Activated CD8-positive, alpha-beta memory T cell treated with anti-CD3 and anti-CD28 coated beads, Interleukin-2, amount 10 ng/mL, durations not matched to agents 7 days and 5 days (primary cell): ENCODE measurements at regions of chr6 and their contacts with region 1.

Region 1: GRCh38 chr6:134049176-134049575 is 3.2 kb downstream of the SLC2A12 start:
- DNase-seq: no peak
- ATAC-seq: no peak
- H3K4me3 Mint-ChIP-seq: no peak overlapping the region
- H3K27ac Mint-ChIP-seq: no peak overlapping the region
- H3K4me1 Mint-ChIP-seq: peaks cover 12% of the 10 kb centered on the region
- H3K27me3 Mint-ChIP-seq: peaks cover 17% of the 10 kb centered on the region

Region 2: DNA sequence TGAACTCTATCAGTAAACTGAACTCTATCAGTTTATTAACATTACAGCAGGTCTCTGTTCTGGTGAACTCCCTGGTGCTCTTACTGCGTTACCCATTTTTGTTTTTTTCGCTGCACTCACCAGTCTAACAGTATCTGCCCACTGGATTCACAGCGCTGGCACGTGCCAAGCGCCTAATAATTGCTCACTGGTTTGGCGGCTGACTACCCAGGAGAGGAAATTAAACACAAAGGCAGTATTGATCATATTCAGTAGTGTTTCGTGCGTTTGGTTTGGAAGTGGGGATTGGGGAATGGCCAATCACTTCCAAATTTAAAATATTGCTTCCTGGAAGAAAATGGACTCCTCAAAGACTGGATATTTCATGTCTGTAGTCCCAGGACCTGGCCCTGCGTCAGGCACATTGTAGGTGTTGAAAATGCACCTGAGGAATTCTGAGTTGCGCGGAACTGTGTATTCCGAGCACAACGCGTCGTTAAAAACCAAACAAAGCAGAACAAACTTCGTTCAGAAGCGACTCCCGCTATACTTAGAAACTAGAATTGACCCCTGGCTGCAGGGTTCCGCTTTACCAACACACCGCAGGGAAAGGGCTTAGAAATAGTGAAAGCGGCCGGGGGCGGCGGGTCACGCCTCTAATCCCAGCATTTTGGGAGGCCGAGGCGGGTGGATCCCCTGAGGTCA is 1235.9 kb before region 1 on chr6:
- CTCF ChIA-PET with region 1: no interaction called
- DNase-seq: peak; percentile 62
- ATAC-seq: peak; percentile 6
- H3K4me3 Mint-ChIP-seq: peak overlapping the region; percentile 97
- H3K27ac Mint-ChIP-seq: peak overlapping the region; percentile 100
- H3K4me1 Mint-ChIP-seq: peaks cover 37% of the 10 kb centered on the region
- H3K27me3 Mint-ChIP-seq: peaks cover 12% of the 10 kb centered on the region

Region 3: DNA sequence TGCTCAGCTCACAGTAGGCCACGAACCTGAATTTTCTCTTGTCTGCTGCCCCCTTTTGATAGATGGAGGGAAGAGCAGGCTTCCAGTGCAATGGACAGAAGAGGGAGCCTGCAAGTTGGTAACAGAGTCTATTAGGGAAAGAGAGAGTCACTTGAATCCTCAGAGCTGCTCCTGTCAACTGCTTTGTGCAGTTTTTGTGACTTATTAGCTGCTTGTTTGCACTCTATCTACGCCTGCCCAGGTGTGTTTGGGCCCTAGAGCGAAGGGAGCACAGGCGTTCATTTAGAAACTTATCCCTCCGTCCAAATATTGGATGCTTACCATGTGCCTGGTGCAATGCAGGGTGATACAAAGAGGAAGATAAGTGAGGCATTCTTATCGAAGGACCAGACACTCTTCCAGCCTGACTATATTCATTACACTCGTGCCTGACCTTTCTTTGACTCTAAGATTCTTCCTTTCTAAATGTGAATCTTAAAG is 14.8 kb after region 1 on chr6:
- CTCF ChIA-PET with region 1: interaction called, 25 read pairs
- DNase-seq: peak; percentile 66
- ATAC-seq: peak; percentile 91
- H3K4me3 Mint-ChIP-seq: no peak overlapping the region
- H3K27ac Mint-ChIP-seq: no peak overlapping the region
- H3K4me1 Mint-ChIP-seq: no peaks in the 10 kb centered on the region
- H3K27me3 Mint-ChIP-seq: peaks cover 2% of the 10 kb centered on the region